ENCODE measurements at regions of chr1 and their contacts with region 1.

Region 1: DNA sequence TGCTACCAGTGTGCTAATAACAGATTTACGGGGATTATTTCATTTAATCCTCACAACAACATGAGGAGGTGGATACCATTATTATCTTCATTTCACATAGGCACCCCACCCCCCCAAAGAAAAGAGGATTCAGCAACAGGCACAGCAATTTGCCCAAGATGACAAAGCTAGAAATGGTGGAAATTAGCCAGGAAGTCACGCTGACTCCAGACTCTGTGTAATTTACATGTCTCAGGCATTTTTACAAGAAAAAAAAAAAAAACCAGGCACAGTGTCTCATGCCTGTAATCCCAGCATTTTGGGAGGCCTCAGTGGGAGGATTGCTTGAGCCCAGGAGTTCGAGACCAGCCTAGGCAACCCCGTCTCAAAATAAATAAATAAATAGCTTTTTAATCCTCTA is 37.5 kb upstream of the PRDM2 start:
- DNase-seq: no peak
- ATAC-seq: no peak
- H3K4me3 ChIP-seq: no peak overlapping the region
- H3K27ac ChIP-seq: no peak overlapping the region
- H3K4me1 ChIP-seq: no peaks in the 10 kb centered on the region
- H3K27me3 ChIP-seq: no peaks in the 10 kb centered on the region
- CTCF ChIP-seq: no peak

Region 2: DNA sequence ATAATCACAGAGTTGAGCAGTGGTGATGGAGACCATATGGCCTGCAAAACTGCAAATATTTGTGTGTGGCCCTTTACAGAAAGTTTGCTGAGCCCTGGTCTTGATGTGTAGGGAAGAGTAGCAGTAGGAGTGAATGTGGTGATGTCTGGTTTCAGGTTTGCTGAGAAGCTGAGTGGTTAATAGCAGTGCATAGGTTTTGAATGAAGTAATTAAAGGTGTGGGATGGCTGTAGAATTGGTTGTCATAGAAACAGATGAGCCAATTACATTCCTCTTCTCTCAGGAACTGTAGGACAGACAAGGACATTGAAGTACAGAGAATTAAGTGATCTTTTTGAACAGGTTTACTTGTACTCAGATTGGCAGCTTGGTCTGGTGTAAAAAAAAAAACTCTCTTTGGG is 74.9 kb after region 1 on chr1:
- intact Hi-C with region 1: no loop called
- DNase-seq: no peak
- ATAC-seq: no peak
- H3K4me3 ChIP-seq: no peak overlapping the region
- H3K27ac ChIP-seq: no peak overlapping the region
- H3K4me1 ChIP-seq: peaks cover 4% of the 10 kb centered on the region
- H3K27me3 ChIP-seq: no peaks in the 10 kb centered on the region
- CTCF ChIP-seq: no peak

Region 3: GRCh38 chr1:13960375-13960987 is 298.0 kb after region 1 on chr1:
- intact Hi-C with region 1: loop called (anchors 5 kb)
- DNase-seq: peak; percentile 76
- ATAC-seq: peak; percentile 92
- H3K4me3 ChIP-seq: no peak overlapping the region
- H3K27ac ChIP-seq: no peak overlapping the region
- H3K4me1 ChIP-seq: no peaks in the 10 kb centered on the region
- H3K27me3 ChIP-seq: peaks cover 6% of the 10 kb centered on the region
- CTCF ChIP-seq: peak; percentile 96